GM12878 (cell line): ENCODE measurements at regions of chr3 and their contacts with region 1.

Region 1: GRCh38 chr3:98573181-98573728 is 20.2 kb downstream of the CPOX start:
- DNase-seq: no peak
- ATAC-seq: peak; percentile 85
- H3K4me3 ChIP-seq: peak overlapping the region; percentile 42; the same call in 1 of the 2 replicates
- H3K27ac ChIP-seq: peak overlapping the region; percentile 79
- H3K4me1 ChIP-seq: peaks cover 15% of the 10 kb centered on the region
- H3K27me3 ChIP-seq: no peaks in the 10 kb centered on the region
- CTCF ChIP-seq: peak; percentile 42 to 53 (median 53); a peak in 5 of 6 replicates
- EP300 ChIP-seq: no peak
- POLR2A ChIP-seq: no peak
- RAD21 ChIP-seq: peak; percentile 92

Region 2: GRCh38 chr3:98329392-98330124 is 243.7 kb before region 1 on chr3:
- CTCF ChIA-PET with region 1: interaction called, 13 read pairs
- POLR2A ChIA-PET with region 1: no interaction called
- RAD21 ChIA-PET with region 1: no interaction called
- SMC1A ChIA-PET with region 1: interaction called, 5 read pairs
- in situ Hi-C with region 1: no loop called
- intact Hi-C with region 1: loop called (anchors 5 kb)
- DNase-seq: peak; percentile 27
- ATAC-seq: peak; percentile 75
- H3K4me3 ChIP-seq: no peak overlapping the region
- H3K27ac ChIP-seq: no peak overlapping the region
- H3K4me1 ChIP-seq: peaks cover 5% of the 10 kb centered on the region
- H3K27me3 ChIP-seq: no peaks in the 10 kb centered on the region
- CTCF ChIP-seq: peak; percentile 78 to 92 (median 80)
- EP300 ChIP-seq: no peak
- POLR2A ChIP-seq: no peak
- RAD21 ChIP-seq: peak; percentile 89

Region 3: GRCh38 chr3:98440283-98440942 is 132.8 kb before region 1 on chr3:
- CTCF ChIA-PET with region 1: interaction called, 4 read pairs
- POLR2A ChIA-PET with region 1: no interaction called
- RAD21 ChIA-PET with region 1: no interaction called
- SMC1A ChIA-PET with region 1: interaction called, 3 read pairs
- in situ Hi-C with region 1: loop called (anchors 5 kb)
- intact Hi-C with region 1: loop called (anchors 5 kb)
- DNase-seq: no peak
- ATAC-seq: no peak
- H3K4me3 ChIP-seq: no peak overlapping the region
- H3K27ac ChIP-seq: no peak overlapping the region
- H3K4me1 ChIP-seq: no peaks in the 10 kb centered on the region
- H3K27me3 ChIP-seq: no peaks in the 10 kb centered on the region
- CTCF ChIP-seq: no peak
- EP300 ChIP-seq: no peak
- POLR2A ChIP-seq: no peak
- RAD21 ChIP-seq: no peak

Region 4: DNA sequence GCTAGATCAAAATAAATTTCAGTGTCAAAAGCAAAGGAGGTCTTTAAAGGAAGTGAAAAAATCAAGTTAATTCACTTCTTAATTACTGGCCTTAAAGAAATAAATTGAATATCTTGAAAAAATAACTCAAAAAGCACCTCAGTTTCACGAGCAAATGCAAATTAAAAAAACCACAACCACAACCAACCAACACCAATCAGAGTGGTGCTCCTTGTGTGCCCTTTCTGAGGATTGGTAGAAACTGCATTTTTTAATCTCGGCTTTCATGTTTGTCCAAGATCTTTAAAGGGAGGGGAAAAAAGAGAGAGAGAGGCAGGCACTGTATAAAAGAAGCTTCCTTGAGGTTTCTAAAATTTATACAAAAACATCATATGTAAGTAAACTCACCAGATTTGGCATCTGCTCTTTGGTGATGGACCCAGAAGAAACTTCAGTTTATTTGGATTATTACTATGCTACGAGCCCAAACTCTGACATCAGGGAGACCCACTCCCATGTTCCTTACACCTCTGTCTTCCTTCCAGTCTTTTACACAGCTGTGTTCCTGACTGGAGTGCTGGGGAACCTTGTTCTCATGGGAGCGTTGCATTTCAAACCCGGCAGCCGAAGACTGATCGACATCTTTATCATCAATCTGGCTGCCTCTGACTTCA is 41.5 kb before region 1 on chr3 and contains the start of gene GPR15:
- CTCF ChIA-PET with region 1: interaction called, 40 read pairs
- POLR2A ChIA-PET with region 1: interaction called, 6 read pairs
- RAD21 ChIA-PET with region 1: interaction called, 511 read pairs
- SMC1A ChIA-PET with region 1: interaction called, 19 read pairs
- in situ Hi-C with region 1: no loop called
- intact Hi-C with region 1: no loop called
- DNase-seq: no peak
- ATAC-seq: peak; percentile 44
- H3K4me3 ChIP-seq: peak within 1 kb of the TSS; percentile 81
- H3K27ac ChIP-seq: peak within 1 kb of the TSS; percentile 97
- H3K4me1 ChIP-seq: peaks cover 3% of the 10 kb centered on the region; the same call in 1 of the 2 replicates
- H3K27me3 ChIP-seq: no peaks in the 10 kb centered on the region
- CTCF ChIP-seq: no peak
- EP300 ChIP-seq: no peak; a peak in 1 of 4 replicates
- POLR2A ChIP-seq: no peak
- RAD21 ChIP-seq: no peak
- polyA plus RNA-seq, gene GPR15: 70.7 to 145 TPM

Region 5: DNA sequence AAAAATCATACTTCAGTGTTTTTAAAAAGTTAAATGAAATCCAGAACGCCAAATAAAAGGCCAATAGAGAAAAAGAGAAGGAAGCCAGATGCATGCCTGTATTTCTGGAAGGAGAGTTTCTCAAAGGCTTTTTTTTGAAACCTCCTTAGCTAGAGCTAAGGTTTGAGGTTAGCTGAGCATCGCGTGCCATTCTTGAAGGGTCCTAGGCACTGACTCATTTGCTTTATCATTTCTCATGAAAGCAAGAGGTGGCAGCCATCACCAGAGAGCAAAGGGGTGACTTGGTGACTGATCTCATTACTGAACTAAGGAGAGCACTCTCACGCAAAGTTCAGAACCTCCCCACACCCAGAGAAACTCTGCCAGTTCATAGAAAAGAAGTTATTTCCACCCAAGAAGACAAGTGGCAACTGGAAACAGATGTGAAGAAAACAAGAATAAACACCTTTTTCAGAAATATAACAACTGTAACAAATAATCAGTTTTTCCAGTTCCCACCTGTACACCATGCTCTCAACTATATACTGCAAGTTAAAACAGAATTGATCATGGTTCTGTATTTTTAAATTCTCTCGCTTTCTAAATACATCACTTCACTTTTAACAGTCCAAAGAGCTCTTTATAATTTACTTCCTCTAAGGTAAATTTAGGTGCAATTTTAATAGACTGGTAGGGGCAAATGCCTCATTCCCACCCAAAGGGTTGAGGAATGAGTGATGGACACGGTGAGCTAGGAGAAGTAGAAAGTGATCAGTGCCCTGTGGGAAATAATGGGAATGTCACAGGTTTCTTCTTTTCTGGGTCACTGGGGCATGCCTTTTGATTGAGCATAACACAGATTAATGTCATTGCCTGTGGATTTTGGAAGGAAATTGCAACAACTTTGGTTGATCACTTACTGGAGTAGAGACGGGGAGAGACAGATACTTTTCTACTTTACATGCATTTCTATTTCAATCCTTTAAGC is 16.8 kb before region 1 on chr3:
- CTCF ChIA-PET with region 1: interaction called, 19 read pairs
- POLR2A ChIA-PET with region 1: interaction called, 12 read pairs
- RAD21 ChIA-PET with region 1: interaction called, 58 read pairs
- SMC1A ChIA-PET with region 1: interaction called, 230 read pairs
- in situ Hi-C with region 1: no loop called
- intact Hi-C with region 1: loop called (anchors 1 kb)
- DNase-seq: peak; percentile 99
- ATAC-seq: peak; percentile 55
- H3K4me3 ChIP-seq: peak overlapping the region; percentile 58
- H3K27ac ChIP-seq: peak overlapping the region; percentile 100
- H3K4me1 ChIP-seq: peaks cover 20% of the 10 kb centered on the region
- H3K27me3 ChIP-seq: no peaks in the 10 kb centered on the region
- CTCF ChIP-seq: no peak
- EP300 ChIP-seq: peak; percentile 100
- POLR2A ChIP-seq: peak; percentile 49; the same call in 1 of the 2 replicates
- RAD21 ChIP-seq: peak; percentile 35; the same call in 1 of the 2 replicates

Region 6: DNA sequence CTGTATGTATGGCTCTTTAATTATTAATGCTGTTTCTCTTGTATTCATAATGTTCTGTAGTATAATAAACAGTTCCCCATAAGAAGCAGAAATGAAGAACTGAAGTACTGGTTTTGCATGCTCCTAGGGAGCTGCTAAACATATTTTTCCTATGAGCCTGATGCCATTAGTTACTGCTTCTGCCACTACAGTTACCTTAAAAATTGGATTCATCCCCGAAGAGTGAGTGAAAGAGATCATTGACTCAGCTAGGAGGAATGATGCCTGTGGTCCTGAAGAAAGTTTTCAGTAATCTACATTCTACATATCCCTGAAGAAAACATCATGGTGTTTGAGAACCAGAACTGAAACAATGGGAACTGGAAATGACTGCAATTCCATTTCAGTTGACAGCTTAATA is 152.8 kb after region 1 on chr3:
- CTCF ChIA-PET with region 1: no interaction called
- POLR2A ChIA-PET with region 1: no interaction called
- RAD21 ChIA-PET with region 1: no interaction called
- SMC1A ChIA-PET with region 1: no interaction called
- in situ Hi-C with region 1: no loop called
- intact Hi-C with region 1: no loop called
- DNase-seq: no peak
- ATAC-seq: no peak
- H3K4me3 ChIP-seq: no peak overlapping the region
- H3K27ac ChIP-seq: no peak overlapping the region
- H3K4me1 ChIP-seq: no peaks in the 10 kb centered on the region
- H3K27me3 ChIP-seq: no peaks in the 10 kb centered on the region
- CTCF ChIP-seq: no peak
- EP300 ChIP-seq: no peak
- POLR2A ChIP-seq: no peak
- RAD21 ChIP-seq: no peak